ENCODE measurements at regions of chr9 and their contacts with region 1.

Region 1: DNA sequence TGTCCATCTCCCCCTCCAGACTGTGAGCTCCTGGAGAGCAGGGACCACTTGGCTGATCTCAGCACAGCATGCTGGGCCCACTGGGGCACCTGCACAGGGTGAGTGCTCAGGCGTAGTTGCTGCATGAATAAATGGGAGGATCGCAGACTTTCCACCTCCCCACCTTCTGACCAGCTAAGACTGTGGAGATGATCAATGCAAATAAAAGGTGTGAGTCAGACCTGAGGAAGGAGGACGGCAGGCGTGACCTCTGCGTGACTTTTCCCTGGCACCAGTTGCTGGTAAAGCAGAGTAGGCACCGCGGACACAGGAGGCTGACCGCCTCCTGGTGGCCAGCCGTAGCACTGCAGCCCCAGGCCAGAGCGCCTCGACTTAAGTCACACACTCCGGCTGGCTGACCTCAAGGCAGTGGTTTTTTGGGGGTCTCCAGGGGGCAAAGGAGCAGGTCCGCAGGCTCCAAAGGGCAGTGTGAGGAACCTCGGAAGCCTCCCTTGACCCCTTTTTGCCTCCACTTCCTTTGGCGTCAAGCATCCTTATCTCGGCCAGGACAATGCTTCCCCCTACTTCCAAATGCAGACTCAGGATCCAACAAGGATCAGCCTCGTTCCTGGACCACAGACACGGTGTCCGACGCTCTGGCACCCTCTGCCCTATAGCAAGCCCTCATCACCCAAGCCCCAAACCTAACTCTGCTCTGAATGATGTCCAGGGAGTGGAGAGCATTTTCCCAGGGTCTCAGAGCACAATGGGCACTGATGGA is 12.7 kb upstream of the TDRD7 start:
- DNase-seq: peak; percentile 87
- ATAC-seq: peak; percentile 97
- H3K4me3 ChIP-seq: no peak overlapping the region
- H3K27ac ChIP-seq: no peak overlapping the region
- H3K4me1 ChIP-seq: no peaks in the 10 kb centered on the region
- H3K27me3 ChIP-seq: no peaks in the 10 kb centered on the region
- CTCF ChIP-seq: peak; percentile 99

Region 2: DNA sequence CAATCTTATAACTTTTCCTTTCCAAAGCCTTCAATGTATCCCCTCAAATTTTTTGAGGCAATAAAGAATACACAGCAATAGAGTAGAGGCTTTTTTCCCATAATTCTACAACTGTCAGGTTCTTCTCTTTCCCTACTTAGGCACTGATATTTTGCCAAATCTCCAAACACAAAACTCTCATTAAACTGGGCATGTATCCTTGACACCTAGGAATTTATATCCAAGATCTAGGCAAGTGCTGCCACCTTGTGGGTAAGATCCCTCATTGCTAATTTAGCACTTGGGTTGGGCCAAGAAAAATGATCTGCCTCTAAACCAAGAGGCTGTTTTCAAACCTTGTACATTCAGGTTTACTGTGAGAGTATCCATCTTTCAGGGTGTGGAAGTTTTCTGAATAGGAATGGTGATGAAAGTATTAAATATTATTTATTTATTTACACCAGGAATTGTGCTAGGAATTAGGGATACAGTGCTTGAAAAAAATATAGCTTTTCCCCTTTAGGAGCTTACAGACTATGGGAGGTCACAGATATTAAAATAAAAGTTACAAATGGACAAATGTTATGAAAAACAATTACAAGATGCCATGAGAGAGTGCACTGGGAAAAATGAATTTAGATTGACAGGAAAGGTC is 216.4 kb after region 1 on chr9:
- intact Hi-C with region 1: loop called (anchors 10 kb)
- DNase-seq: no peak
- ATAC-seq: peak; percentile 91
- H3K4me3 ChIP-seq: no peak overlapping the region
- H3K27ac ChIP-seq: no peak overlapping the region
- H3K4me1 ChIP-seq: no peaks in the 10 kb centered on the region
- H3K27me3 ChIP-seq: no peaks in the 10 kb centered on the region
- CTCF ChIP-seq: peak; percentile 84

Region 3: DNA sequence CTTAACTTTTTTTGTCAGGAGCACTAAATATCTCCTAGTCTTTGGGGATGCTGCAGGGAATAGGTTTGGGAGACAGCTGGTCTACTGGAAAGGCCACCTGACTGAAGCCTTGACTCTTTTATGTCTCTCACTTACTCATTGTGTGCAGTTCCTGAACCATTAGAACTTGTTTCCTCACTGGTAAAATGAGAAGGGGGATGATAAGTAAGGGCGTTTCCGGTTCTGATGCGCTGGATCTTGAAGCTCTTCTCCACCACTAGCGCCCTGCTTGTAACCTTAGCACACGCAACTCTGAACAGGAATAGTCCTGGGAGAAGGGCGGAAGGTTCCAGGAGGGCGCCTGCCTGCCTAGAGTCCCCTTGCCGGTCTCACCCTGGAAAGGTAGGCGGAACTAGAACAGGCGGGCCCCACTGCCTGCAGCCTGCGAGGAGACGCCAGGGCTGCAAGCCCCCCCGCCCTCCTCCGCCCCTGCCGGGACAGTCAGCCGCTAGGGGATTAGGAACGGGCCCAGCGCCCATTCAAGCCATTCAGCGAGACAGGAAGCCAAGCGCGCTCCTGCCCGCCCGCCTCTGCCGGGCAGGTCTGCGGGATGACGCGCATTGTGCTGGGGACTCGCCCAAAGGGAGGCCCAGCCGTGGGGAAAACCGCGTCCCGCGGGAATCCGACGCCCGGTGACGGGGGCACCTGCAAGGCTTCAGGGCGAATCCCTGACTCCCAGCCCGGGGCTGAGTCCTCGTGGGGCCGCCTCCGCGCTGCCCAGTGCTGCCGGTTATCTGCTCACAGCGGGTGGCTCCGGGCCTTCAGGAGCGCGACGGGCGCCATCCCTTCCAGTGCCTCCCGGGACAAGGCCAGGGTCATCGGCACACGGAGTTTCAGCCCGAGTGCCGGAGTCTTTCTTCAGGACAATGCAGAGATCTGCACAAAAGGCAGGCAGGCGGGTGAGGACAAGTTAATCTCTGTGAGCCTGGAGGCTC is 342.0 kb after region 1 on chr9:
- intact Hi-C with region 1: no loop called
- DNase-seq: peak; percentile 74
- ATAC-seq: peak; percentile 82
- H3K4me3 ChIP-seq: peak overlapping the region; percentile 35
- H3K27ac ChIP-seq: no peak overlapping the region
- H3K4me1 ChIP-seq: no peaks in the 10 kb centered on the region
- H3K27me3 ChIP-seq: peaks cover 42% of the 10 kb centered on the region
- CTCF ChIP-seq: no peak